GM18951 (cell line): ENCODE measurements at regions of chr2 and their contacts with region 1.

Region 1: DNA sequence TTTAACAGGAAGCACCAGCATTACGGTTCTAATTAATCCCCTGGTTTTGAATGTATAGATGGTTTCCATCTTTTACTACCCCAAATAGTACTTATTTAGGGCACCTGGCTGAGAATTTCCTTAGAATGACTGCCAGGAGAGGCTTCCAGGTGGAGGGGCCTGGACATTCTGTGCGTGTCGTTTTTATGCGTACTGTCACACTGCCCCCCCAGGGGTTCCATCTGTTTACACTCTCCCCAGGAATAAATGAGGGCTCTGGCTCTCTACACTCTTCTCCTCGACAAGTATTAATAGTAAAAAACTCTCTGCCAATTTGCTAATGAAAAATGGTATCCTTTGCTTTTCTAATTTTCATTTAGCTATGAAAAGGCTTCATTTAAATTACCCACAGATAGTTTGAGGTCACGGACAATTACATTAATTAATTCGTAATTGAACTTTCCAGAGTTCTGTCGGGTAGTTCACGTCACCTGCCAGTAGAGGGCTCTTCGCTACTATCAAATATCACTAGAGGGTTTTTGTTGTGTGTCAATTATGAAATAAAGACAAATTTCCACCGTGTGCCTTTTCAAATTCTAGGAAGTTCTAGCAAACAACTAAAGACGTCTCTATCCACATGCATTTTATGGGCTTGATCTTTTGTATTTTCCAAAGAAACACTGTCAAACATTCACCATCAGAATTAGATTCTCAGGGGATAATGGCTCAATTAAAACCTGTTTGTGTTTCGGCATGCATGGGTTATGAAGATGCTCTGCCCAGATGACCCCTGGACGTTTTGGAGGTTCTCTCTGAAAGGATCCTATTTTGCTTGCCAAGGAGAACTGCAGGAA is 88.8 kb upstream of the ASB18 start:
- POLR2A ChIP-seq: no peak

Region 2: GRCh38 chr2:236576087-236576486 is 223.1 kb after region 1 on chr2:
- in situ Hi-C with region 1: loop called (anchors 25 kb)
- POLR2A ChIP-seq: no peak

Region 3: DNA sequence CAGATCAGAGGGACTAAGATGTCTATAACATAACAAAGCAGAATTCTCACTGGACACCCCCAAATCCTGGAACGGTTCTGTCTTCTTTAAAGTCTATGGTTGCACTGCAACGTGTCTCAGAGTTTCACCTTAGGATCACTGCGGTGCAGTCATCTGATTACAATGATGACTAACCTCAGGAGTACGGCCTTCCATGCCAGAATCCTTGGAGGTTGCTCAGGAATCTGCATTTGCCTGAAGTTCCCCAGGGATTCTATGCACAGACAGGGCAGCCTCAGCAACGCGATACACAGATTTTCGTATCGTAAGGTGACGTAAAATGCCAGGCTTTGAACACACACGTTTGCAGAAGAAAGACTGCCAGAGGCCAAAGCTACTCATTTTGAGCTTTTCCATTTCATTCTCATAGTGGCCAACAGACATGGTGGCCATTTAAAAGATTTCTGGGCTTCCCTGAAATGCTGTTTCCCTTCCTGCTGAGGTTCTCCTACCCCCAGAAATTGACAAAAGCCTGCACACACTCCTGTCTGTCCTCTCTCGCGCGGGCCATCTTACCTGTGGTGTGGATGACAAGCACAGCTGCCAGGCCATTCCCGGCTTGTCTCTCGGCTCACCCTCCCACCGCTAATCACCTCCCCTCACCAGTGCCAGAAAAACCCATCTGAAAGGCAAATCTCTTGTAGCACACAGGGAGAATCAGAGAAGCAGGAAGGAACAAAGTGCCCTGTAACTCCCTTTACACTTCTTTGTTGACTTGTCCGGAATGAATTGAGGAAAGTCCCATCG is 365.4 kb after region 1 on chr2:
- in situ Hi-C with region 1: no loop called
- POLR2A ChIP-seq: no peak